Activated CD4-positive, alpha-beta T cell treated with anti-CD3 and anti-CD28 coated beads for 36 hours (primary cell): ENCODE measurements at regions of chr6 and their contacts with region 1.

Region 1: GRCh38 chr6:1770968-1771723 is 161.4 kb downstream of the FOXC1 start:
- DNase-seq: peak; percentile 79
- ATAC-seq: peak; percentile 94
- H3K4me3 Mint-ChIP-seq: no peak overlapping the region
- H3K27ac Mint-ChIP-seq: peak overlapping the region; percentile 85
- H3K4me1 Mint-ChIP-seq: peaks cover 55% of the 10 kb centered on the region
- H3K27me3 Mint-ChIP-seq: no peaks in the 10 kb centered on the region

Region 2: GRCh38 chr6:548517-548916 is 1222.6 kb before region 1 on chr6:
- CTCF ChIA-PET with region 1: no interaction called
- POLR2A ChIA-PET with region 1: no interaction called
- intact Hi-C with region 1: loop called in 1 of 2 experiments (anchors 10 kb)
- DNase-seq: peak; percentile 75
- ATAC-seq: peak; percentile 90
- H3K4me3 Mint-ChIP-seq: peak overlapping the region; percentile 57
- H3K27ac Mint-ChIP-seq: peak overlapping the region; percentile 92
- H3K4me1 Mint-ChIP-seq: peaks cover 70% of the 10 kb centered on the region
- H3K27me3 Mint-ChIP-seq: no peaks in the 10 kb centered on the region

Region 3: GRCh38 chr6:1786455-1787453 is 15.6 kb after region 1 on chr6:
- CTCF ChIA-PET with region 1: no interaction called
- POLR2A ChIA-PET with region 1: no interaction called
- intact Hi-C with region 1: loop called in 1 of 2 experiments (anchors 1 kb)
- DNase-seq: peak; percentile 65
- ATAC-seq: peak; percentile 97
- H3K4me3 Mint-ChIP-seq: no peak overlapping the region
- H3K27ac Mint-ChIP-seq: no peak overlapping the region
- H3K4me1 Mint-ChIP-seq: peaks cover 6% of the 10 kb centered on the region
- H3K27me3 Mint-ChIP-seq: no peaks in the 10 kb centered on the region

Region 4: DNA sequence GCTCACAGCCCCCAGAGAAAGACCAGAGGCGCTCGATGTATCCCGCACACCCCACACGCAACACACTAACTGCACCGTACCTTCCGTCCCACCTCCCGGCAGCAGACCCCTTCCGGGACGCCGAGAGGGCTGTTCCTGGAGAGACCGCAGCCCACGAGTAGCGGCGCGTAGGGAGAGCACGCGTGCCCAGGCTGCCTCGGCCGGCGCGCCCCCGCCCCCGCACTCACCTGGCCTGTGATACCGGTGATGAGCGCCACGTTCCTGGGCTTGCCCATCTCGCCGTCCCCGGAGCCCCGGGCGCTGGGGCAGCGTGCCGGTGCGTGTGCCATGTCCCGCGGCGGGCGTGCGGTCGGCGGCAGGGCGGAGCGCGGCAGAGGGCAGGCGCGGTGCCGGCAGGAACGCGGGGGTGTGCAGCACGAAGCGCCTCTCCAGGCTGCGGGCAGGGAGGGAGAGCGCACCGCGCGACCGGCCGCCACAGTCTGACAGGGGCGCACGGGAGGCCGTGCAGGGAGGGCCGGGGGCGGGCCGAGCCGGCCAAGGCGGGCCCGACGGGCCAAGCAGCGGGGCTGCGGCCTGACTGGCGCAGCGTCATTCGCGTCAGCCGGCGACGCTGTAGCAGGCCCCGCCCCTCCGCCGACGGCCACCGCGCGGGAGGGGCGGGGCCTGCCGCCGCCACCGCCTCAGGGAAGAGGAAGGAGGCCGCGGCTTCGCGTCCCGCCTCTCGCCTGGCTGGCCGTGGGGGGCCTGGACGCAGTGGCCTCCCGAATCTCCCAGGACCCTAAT is 474.1 kb after region 1 on chr6 and contains the start of gene GMDS:
- CTCF ChIA-PET with region 1: no interaction called
- POLR2A ChIA-PET with region 1: no interaction called
- intact Hi-C with region 1: loop called in 1 of 2 experiments (anchors 2 kb)
- DNase-seq: peak; percentile 89
- ATAC-seq: peak; percentile 94
- H3K4me3 Mint-ChIP-seq: peak within 1 kb of the TSS; percentile 91
- H3K27ac Mint-ChIP-seq: peak within 1 kb of the TSS; percentile 97
- H3K4me1 Mint-ChIP-seq: peaks cover 56% of the 10 kb centered on the region
- H3K27me3 Mint-ChIP-seq: no peaks in the 10 kb centered on the region
- total RNA-seq, gene GMDS: 33.2 to 33.5 TPM